ENCODE measurements at regions of chr1 and their contacts with region 1.

Region 1: DNA sequence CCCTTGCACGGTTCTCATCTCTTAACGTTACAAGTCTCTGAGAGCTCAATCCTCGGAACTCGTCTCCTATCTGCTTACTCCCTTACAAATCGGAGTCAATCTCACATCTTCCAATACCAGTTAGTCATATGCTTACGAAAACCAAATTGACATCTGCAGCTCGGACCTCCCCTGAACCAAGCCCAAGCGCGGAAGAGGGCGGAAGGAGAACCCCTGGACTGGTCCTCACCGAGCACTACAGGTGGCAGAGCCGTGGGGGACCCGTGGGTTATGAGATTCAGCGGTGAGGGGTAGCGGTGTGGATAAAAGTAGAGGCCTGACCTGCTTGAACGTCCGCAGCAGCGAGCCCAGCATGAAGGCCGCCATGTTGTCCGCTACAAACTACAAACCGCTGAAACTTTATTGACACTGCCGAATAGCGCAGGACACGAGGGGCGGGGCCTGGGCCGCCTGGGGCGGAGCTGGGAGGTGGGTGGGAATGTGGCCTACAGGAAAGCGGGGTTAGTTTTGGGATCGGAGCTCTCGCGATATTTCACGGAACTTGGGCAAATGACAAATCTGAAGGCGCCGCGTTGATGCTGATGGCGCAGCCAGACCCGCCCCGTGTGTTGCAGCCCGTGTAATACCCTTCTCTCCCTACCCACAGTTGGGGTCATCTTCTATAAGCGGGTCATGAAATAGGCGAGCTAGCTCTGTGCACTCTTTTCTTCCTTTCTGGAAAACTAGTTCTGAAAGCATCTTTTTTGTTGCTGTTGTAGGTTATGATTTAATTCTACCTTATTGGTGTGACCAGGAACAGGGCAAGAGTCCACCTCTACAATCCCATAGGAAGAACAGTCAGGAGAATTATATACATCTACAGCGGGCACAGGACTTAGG is at the start of gene MRPS14:
- DNase-seq: peak; percentile 95
- ATAC-seq: peak; percentile 98
- H3K4me3 ChIP-seq: peak within 1 kb of the TSS; percentile 89
- H3K27ac ChIP-seq: peak within 1 kb of the TSS; percentile 90
- H3K4me1 ChIP-seq: no peaks in the 10 kb centered on the region; the same call in 1 of the 2 replicates
- H3K27me3 ChIP-seq: no peaks in the 10 kb centered on the region
- CTCF ChIP-seq: no peak
- EP300 ChIP-seq: no peak
- POLR2A ChIP-seq: peak; percentile 90
- RAD21 ChIP-seq: no peak
- polyA plus RNA-seq, gene MRPS14: 223 to 224 TPM

Region 2: DNA sequence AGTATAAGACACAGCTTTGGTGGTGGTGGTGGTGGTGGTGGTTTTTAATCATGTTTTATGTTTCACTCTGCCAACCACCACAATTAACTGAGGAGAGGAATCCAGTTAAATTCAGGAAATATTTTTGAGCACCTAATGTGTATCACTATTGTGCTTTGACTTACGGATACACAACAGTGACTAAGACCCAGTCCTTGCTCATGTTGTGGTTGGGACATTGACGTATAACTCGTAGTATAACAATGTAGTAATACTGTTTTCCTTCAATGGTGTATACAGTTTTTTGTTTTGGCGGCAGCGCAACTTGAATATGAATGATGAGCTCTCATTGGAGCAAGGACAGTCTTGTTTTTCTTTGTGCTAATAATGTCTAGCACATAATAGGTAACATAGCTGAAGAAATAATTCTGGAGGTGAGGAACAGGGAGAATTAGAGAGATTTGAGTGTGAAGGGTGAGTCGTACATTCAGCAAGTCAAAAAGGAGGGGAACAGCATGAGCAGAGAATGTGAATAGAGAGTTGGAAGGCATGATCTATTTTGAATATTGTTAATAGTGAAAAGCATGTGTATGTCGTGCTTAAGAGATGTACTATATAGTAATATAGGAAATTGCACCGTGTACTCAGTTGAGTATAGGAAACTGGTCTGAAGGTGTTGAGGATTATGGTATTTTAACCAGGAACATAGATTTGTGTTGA is 18.0 kb before region 1 on chr1:
- CTCF ChIA-PET with region 1: interaction called, 5 read pairs
- POLR2A ChIA-PET with region 1: interaction called, 45 read pairs
- RAD21 ChIA-PET with region 1: interaction called, 58 read pairs
- SMC1A ChIA-PET with region 1: interaction called, 33 read pairs
- in situ Hi-C with region 1: no loop called
- intact Hi-C with region 1: no loop called
- DNase-seq: no peak
- ATAC-seq: no peak
- H3K4me3 ChIP-seq: no peak overlapping the region
- H3K27ac ChIP-seq: no peak overlapping the region
- H3K4me1 ChIP-seq: peaks cover 9% of the 10 kb centered on the region
- H3K27me3 ChIP-seq: no peaks in the 10 kb centered on the region
- CTCF ChIP-seq: no peak
- EP300 ChIP-seq: no peak
- POLR2A ChIP-seq: no peak
- RAD21 ChIP-seq: no peak

Region 3: DNA sequence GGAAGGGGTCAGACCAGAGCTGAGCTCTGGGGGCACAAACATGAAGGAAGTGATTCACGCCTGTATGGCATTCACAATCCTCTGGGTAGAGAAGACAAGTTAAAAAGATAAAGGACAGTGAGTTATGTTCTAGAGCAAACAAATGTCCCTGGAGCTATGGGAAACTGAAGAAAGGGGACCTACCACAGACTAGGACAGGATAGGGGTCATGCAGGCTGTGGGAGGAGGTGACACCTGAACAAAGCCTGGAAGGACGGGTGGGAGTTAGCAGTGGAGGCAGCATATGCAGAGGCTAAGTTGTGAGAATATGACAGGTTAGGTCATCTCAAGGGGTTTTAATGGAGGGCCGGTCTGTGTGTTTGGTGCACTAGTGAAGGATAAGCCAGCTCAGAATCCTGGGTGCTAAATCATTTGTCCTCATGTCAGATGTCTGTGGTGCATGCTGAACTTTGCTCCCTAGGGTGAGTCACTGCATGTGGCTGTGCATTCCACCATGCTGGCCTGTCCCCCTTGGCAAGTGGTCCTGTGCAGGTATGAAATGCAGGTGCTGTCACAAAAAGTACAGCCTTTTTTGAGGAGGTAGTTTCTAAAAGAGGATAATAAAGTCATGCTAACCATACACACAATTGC is 72.8 kb after region 1 on chr1:
- CTCF ChIA-PET with region 1: no interaction called
- POLR2A ChIA-PET with region 1: no interaction called
- RAD21 ChIA-PET with region 1: no interaction called
- SMC1A ChIA-PET with region 1: no interaction called
- in situ Hi-C with region 1: no loop called
- intact Hi-C with region 1: no loop called
- DNase-seq: no peak
- ATAC-seq: no peak
- H3K4me3 ChIP-seq: no peak overlapping the region
- H3K27ac ChIP-seq: no peak overlapping the region
- H3K4me1 ChIP-seq: no peaks in the 10 kb centered on the region
- H3K27me3 ChIP-seq: 0 out of 4 replicates have a peak, but pooled peaks cover 0 to 2% of the 10 kb centered on the region in 2 experiments
- CTCF ChIP-seq: no peak
- EP300 ChIP-seq: no peak
- POLR2A ChIP-seq: no peak
- RAD21 ChIP-seq: no peak

Region 4: DNA sequence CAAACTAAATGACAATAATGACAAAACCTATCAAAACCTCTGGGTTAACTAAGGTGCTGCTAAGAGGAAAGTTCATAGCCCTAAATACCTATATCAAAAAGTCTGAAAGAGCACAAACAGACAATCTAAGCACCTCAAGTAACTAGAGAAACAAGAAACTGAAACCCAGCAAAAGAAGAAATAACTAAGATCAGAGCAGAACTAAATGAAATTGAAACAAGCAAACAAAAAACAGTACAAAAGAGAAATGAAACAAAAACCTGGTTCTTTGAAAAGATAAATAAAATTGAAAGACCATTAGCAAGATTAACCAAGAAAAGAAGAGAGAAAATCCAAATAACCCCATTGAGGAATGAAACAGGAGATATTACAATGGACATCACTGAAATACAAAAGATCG is 214.1 kb after region 1 on chr1:
- CTCF ChIA-PET with region 1: no interaction called
- POLR2A ChIA-PET with region 1: no interaction called
- RAD21 ChIA-PET with region 1: no interaction called
- SMC1A ChIA-PET with region 1: no interaction called
- in situ Hi-C with region 1: no loop called
- intact Hi-C with region 1: no loop called
- DNase-seq: peak; percentile 23
- ATAC-seq: peak; percentile 85
- H3K4me3 ChIP-seq: no peak overlapping the region
- H3K27ac ChIP-seq: peak overlapping the region; percentile 31; the same call in 1 of the 2 replicates
- H3K4me1 ChIP-seq: 0 out of 2 replicates have a peak, but pooled peaks cover 3% of the 10 kb centered on the region
- H3K27me3 ChIP-seq: no peaks in the 10 kb centered on the region
- CTCF ChIP-seq: no peak
- EP300 ChIP-seq: no peak
- POLR2A ChIP-seq: no peak
- RAD21 ChIP-seq: no peak

Measured in GM12878 (cell line).